Tibial artery (tissue), 4 donors: ENCODE measurements at regions of chr10 and their contacts with region 1.

Region 1: DNA sequence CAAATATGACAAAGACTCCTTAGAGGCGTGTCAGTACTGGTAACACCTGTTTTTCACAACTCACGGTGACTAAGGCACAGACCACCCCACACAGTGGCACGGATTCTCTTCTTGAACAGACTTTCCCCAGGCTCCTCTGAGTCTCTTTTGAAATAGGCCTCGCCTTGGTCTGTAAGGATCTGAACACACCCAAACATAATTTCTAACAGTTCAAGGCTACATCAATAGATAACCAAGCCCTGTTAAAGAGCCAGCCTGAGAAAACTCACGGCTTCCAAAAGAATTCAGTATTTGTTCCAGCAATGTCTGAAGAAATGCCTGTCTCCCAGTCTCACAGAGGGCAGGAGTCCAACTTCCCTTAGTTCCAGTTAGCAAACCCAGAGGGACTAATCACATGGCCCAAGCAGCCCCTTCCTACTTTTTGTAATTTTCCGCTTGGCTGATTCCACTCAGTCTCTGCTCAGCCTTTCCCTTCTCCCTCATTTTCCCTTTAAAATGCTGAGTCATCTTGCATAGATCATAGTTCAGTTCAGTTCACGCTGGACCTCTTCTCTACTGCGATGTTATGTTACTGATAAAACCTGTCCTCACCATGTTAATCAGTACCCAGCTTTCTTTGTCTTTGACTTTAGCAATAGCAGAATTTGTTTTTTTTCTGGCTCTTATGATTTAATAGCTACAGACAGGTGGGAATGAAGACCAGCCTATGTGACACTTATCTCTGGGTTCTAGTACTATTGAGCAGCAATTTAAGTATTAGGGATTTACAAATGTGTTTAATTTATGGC is 22.6 kb upstream of the AKR1C3 start:
- DNase-seq: peak; percentile 86 to 92
- H3K4me3 ChIP-seq: no peak overlapping the region
- H3K27ac ChIP-seq: peak overlapping the region; percentile 81 to 82
- H3K4me1 ChIP-seq: peaks cover 0 to 33% (median 19%) of the 10 kb centered on the region in 4 donors
- H3K27me3 ChIP-seq: no peaks in the 10 kb centered on the region
- CTCF ChIP-seq: no peak

Region 2: GRCh38 chr10:4947635-4948596 is 123.7 kb before region 1 on chr10:
- intact Hi-C with region 1: loop called (anchors 10 kb)
- DNase-seq: peak; percentile 64 to 78
- H3K4me3 ChIP-seq: no peak overlapping the region
- H3K27ac ChIP-seq: peak overlapping the region; percentile 79 to 82
- H3K4me1 ChIP-seq: peaks cover 0 to 62% (median 35%) of the 10 kb centered on the region in 4 donors
- H3K27me3 ChIP-seq: no peaks in the 10 kb centered on the region
- CTCF ChIP-seq: no peak

Region 3: GRCh38 chr10:5629303-5630111 is 557.9 kb after region 1 on chr10:
- intact Hi-C with region 1: loop called (anchors 5 kb)
- DNase-seq: peak; percentile 86 to 89
- H3K4me3 ChIP-seq: peak overlapping the region in 1 of 2 donors; percentile 40
- H3K27ac ChIP-seq: peak overlapping the region; percentile 88
- H3K4me1 ChIP-seq: peaks cover 0 to 85% (median 63%) of the 10 kb centered on the region in 4 donors
- H3K27me3 ChIP-seq: no peaks in the 10 kb centered on the region
- CTCF ChIP-seq: peak; percentile 73 to 82

Region 4: GRCh38 chr10:6958254-6958653 is 1886.6 kb after region 1 on chr10:
- intact Hi-C with region 1: no loop called
- DNase-seq: no peak
- H3K4me3 ChIP-seq: no peak overlapping the region
- H3K27ac ChIP-seq: no peak overlapping the region
- H3K4me1 ChIP-seq: no peaks in the 10 kb centered on the region
- H3K27me3 ChIP-seq: no peaks in the 10 kb centered on the region
- CTCF ChIP-seq: no peak